Activated naive CD4-positive, alpha-beta T cell treated with anti-CD3 and anti-CD28 coated beads for 36 hours (primary cell): ENCODE measurements at regions of chr10 and their contacts with region 1.

Region 1: GRCh38 chr10:26486991-26487850 is 49.1 kb downstream of the APBB1IP start:
- DNase-seq: peak; percentile 89
- H3K4me3 Mint-ChIP-seq: peak overlapping the region; percentile 56
- H3K27ac Mint-ChIP-seq: peak overlapping the region; percentile 98
- H3K4me1 Mint-ChIP-seq: peaks cover 68% of the 10 kb centered on the region
- H3K27me3 Mint-ChIP-seq: no peaks in the 10 kb centered on the region

Region 2: DNA sequence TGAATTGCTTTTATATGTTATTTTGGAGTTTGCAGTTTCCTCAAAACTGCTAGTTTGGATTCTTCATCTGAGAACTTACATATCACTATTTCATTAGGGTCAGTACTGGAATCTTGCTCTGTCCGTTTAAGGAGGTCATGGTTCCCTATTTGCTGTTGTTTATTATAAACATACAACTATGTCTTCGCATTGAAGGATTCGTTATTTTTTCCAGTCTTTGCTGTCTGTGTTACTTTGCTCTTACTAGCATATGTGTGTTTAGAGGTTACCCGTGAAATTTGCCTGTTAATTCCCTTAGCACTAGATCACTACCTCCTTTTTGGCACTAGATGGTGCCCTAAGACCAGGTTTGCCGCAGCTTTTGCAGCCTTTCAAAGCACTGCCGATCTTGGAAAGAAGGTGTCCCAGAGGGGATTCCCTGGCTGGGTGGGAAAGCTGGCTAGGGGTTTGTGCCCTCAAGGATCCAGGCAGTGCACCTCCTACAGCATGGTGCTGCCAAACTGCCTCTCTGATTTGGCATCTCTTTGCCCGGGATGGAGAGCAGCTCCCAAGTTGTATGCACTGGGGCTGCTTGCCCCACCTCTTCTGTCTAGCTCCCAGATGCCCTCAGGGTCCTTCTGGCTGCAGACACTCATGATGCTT is 152.2 kb before region 1 on chr10:
- CTCF ChIA-PET with region 1: interaction called, 6 read pairs
- intact Hi-C with region 1: loop called (anchors 1 kb)
- DNase-seq: peak; percentile 76
- H3K4me3 Mint-ChIP-seq: peak overlapping the region; percentile 71
- H3K27ac Mint-ChIP-seq: peak overlapping the region; percentile 48
- H3K4me1 Mint-ChIP-seq: peaks cover 8% of the 10 kb centered on the region
- H3K27me3 Mint-ChIP-seq: no peaks in the 10 kb centered on the region

Region 3: GRCh38 chr10:26437637-26438461 is 49.4 kb before region 1 on chr10 and contains the start of gene APBB1IP:
- CTCF ChIA-PET with region 1: no interaction called
- intact Hi-C with region 1: loop called (anchors 1 kb)
- DNase-seq: peak; percentile 58
- H3K4me3 Mint-ChIP-seq: peak within 1 kb of the TSS; percentile 81
- H3K27ac Mint-ChIP-seq: peak within 1 kb of the TSS; percentile 98
- H3K4me1 Mint-ChIP-seq: peaks cover 50% of the 10 kb centered on the region
- H3K27me3 Mint-ChIP-seq: no peaks in the 10 kb centered on the region
- total RNA-seq, gene APBB1IP: 29.4 to 30.9 TPM

Region 4: GRCh38 chr10:26475386-26475785 is 11.8 kb before region 1 on chr10:
- CTCF ChIA-PET with region 1: interaction called, 3 read pairs
- intact Hi-C with region 1: loop called (anchors 1 kb)
- DNase-seq: no peak
- H3K4me3 Mint-ChIP-seq: peak overlapping the region; percentile 30
- H3K27ac Mint-ChIP-seq: peak overlapping the region; percentile 89
- H3K4me1 Mint-ChIP-seq: peaks cover 76% of the 10 kb centered on the region
- H3K27me3 Mint-ChIP-seq: no peaks in the 10 kb centered on the region

Region 5: DNA sequence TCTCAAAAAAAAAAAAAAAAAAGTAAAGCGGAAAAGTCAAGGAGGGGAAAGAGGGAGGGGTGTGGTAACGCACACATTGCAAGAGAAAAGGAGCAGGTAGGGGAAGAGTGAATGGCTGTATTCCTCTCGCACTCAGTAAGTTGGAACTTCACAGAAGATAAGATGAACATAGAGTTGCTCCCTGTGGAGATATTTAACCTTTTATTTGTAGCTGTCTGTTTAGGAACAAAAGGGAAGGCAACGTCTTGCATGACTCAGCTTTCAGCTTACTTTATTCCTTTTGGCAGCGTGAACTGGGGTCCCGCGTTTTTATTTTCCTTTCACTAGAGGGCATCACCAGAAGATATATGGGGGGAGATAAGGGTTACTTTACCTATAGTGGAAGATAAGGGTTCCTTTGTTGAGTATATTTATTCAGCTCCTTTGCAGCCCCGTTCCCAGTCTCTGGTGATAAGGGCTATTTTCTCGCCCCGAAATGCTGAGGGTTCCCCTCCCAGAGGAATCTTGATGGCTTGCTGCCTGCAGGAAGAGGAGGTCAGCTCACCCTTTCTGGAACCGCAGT is 29.4 kb after region 1 on chr10:
- CTCF ChIA-PET with region 1: no interaction called
- intact Hi-C with region 1: no loop called
- DNase-seq: no peak
- H3K4me3 Mint-ChIP-seq: no peak overlapping the region
- H3K27ac Mint-ChIP-seq: no peak overlapping the region
- H3K4me1 Mint-ChIP-seq: peaks cover 5% of the 10 kb centered on the region
- H3K27me3 Mint-ChIP-seq: no peaks in the 10 kb centered on the region

Region 6: DNA sequence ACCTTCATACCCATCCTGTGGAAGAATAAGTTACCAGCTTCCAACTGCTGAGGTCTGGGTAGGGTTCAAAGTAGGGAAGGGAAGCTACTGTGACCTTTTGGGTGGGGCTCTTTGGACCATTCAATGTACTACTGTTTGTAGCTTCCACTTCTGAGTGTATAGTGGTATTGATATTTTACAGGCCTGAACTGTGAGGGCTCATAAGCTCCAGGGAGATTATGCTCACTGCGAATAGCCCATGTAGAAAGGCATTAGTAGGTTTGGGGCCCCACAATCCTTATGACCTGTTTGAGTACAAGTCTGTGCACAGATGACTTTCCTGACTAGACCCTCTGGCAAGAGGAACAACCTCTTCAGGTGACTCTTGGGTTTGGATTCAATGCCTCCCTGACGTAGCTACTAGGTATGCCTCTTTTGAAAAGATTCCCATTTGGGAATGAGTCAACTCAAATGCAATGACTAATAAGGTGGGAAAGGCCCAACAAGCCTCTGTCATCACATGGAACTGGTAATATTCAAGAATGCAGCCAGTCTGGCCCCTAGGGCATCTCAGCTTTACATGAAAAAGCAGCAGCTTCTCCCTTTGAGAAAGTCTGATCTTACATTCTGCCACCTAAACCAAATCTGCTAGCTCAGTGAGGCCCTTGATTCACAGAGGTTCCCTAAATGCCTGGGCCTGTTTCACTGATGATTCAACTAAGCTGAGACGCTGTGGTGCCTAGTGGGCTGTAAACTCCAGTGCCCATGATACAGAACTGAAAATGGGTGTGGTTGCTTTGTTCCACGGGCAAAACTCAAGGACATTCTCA is 293.8 kb after region 1 on chr10:
- CTCF ChIA-PET with region 1: no interaction called
- intact Hi-C with region 1: loop called (anchors 5 kb)
- DNase-seq: peak; percentile 70
- H3K4me3 Mint-ChIP-seq: no peak overlapping the region
- H3K27ac Mint-ChIP-seq: peak overlapping the region; percentile 86
- H3K4me1 Mint-ChIP-seq: peaks cover 82% of the 10 kb centered on the region
- H3K27me3 Mint-ChIP-seq: no peaks in the 10 kb centered on the region

Region 7: GRCh38 chr10:26890956-26891355 is 403.7 kb after region 1 on chr10:
- CTCF ChIA-PET with region 1: no interaction called
- intact Hi-C with region 1: no loop called
- DNase-seq: peak; percentile 64
- H3K4me3 Mint-ChIP-seq: no peak overlapping the region
- H3K27ac Mint-ChIP-seq: no peak overlapping the region
- H3K4me1 Mint-ChIP-seq: no peaks in the 10 kb centered on the region
- H3K27me3 Mint-ChIP-seq: no peaks in the 10 kb centered on the region

Region 8: GRCh38 chr10:28334296-28334695 is 1847.1 kb after region 1 on chr10:
- CTCF ChIA-PET with region 1: no interaction called
- intact Hi-C with region 1: loop called (anchors 10 kb)
- DNase-seq: peak; percentile 61
- H3K4me3 Mint-ChIP-seq: peak overlapping the region; percentile 67
- H3K27ac Mint-ChIP-seq: peak overlapping the region; percentile 96
- H3K4me1 Mint-ChIP-seq: peaks cover 76% of the 10 kb centered on the region
- H3K27me3 Mint-ChIP-seq: no peaks in the 10 kb centered on the region